ENCODE measurements at regions of chr18 and their contacts with region 1.

Region 1: GRCh38 chr18:6891788-6892187 is 162.3 kb downstream of the ARHGAP28 start:
- DNase-seq: no peak
- ATAC-seq: no peak
- H3K4me3 ChIP-seq: no peak overlapping the region
- H3K27ac ChIP-seq: no peak overlapping the region
- H3K4me1 ChIP-seq: no peaks in the 10 kb centered on the region
- H3K27me3 ChIP-seq: no peaks in the 10 kb centered on the region

Region 2: GRCh38 chr18:6920099-6920899 is 28.5 kb after region 1 on chr18:
- intact Hi-C with region 1: no loop called
- DNase-seq: no peak
- ATAC-seq: peak; percentile 50
- H3K4me3 ChIP-seq: no peak overlapping the region
- H3K27ac ChIP-seq: no peak overlapping the region
- H3K4me1 ChIP-seq: no peaks in the 10 kb centered on the region
- H3K27me3 ChIP-seq: no peaks in the 10 kb centered on the region

Region 3: DNA sequence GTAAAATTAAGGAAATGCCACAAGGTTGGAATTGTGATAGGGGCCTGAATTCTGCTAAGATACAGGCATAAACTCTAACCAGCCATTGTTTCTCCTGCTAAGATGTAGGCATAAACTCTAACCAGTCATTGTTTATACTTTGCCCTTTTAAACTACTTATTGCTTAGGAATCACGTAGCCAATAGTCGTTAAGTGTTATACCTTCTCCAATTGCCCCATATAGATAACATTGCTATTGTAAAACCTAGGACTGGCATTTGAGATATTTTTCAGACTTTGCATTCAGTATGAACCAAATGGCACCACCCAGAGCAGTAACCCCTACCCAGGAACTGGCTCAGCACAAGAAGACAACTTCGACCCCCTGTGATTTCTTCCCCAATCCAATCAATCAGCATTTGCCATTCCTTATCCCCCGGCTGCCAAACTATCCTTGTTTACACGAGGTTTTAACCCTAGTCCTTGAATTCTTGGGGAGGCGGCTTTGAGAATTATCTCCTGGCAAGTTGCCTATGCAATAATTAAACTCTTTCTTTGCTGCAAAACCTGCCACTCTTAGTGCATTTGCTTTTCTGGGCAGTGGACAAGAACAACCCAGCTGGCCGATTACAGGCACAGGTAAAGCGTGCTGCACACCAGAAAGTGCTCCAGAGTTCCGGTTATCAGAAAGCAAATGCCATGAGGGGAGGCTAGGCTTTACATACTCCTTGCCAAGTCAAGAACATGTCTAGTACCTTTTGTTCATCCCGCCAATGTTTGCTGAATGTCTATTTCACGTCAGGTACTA is 58.2 kb after region 1 on chr18:
- intact Hi-C with region 1: loop called in 1 of 2 experiments (anchors 10 kb)
- DNase-seq: no peak
- ATAC-seq: no peak
- H3K4me3 ChIP-seq: no peak overlapping the region
- H3K27ac ChIP-seq: no peak overlapping the region
- H3K4me1 ChIP-seq: no peaks in the 10 kb centered on the region
- H3K27me3 ChIP-seq: no peaks in the 10 kb centered on the region